Activated CD4-positive, alpha-beta memory T cell treated with anti-CD3 and anti-CD28 coated beads for 36 hours (primary cell): ENCODE measurements at regions of chr10 and their contacts with region 1.

Region 1: GRCh38 chr10:59625721-59626522 is 83.7 kb downstream of the SLC16A9 start:
- DNase-seq: peak; percentile 46
- H3K4me3 Mint-ChIP-seq: no peak overlapping the region
- H3K27ac Mint-ChIP-seq: no peak overlapping the region
- H3K4me1 Mint-ChIP-seq: peaks cover 2% of the 10 kb centered on the region
- H3K27me3 Mint-ChIP-seq: peaks cover 2% of the 10 kb centered on the region

Region 2: DNA sequence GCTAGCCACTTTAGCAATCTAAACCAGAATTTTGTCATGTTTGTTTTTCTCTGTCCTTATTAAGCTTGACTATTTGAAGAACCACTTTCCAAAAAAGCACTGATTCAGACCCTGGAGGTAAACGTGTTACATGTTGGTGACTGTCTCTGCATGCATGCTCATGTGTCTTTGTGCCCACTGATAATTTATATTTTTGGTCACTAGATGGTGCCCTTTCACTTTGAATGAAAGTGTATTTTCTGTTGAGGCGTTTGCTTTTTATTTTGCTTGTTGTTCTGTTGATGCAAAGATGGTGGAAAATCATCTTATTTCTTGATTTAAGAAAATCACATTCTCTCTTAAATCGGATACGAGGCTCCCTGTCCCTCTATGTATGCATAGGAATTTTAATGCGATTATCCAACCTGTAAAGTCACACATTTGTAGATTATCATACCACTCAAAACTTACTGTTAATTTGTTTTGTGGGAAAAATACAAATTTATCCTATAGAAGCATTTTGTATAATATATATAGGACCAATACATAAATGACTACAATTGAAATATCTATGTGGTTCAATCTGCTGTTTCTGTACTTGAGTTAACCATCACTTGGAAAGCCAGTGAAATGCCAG is 843.9 kb before region 1 on chr10:
- CTCF ChIA-PET with region 1: interaction called, 4 read pairs
- POLR2A ChIA-PET with region 1: no interaction called
- intact Hi-C with region 1: loop called (anchors 2 kb)
- DNase-seq: no peak
- H3K4me3 Mint-ChIP-seq: no peak overlapping the region
- H3K27ac Mint-ChIP-seq: no peak overlapping the region
- H3K4me1 Mint-ChIP-seq: no peaks in the 10 kb centered on the region
- H3K27me3 Mint-ChIP-seq: peaks cover 3% of the 10 kb centered on the region

Region 3: DNA sequence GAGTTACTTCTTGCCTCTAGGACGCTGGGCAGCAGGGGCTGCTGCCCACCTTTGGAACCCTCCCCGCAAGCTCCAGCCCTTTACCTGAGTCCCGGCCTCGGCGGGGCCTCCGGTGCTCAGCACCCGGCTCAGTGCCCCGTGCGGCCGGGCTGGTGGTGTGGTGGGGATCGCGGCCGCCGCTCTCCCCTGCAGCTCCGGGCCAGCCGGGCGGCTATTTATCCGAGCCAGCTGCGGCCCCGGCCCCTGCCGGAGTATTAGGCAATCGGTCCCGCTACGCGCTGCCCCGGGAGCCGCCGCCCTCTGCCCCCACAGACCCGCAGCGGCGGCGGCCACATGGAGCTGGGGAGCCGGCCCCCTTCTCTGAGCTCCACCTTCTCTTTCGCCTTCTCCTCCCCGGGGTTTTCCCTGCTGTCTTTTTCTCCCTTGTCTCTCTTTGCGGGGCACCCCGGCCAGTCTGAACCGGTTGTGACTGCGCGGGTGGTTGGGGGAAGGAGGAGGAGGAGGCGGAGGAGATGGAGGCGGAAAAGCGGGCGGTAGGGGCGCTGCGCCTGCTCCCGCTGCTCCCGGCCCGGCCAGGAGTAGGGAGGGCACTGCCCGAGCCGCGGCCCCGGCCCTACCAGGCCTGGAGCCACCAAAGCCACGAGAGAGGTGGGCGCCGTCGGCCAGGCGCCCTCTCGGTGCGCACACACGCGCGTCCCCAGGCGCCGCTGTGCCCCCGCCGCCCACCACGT is 83.6 kb after region 1 on chr10 and contains the start of gene SLC16A9:
- CTCF ChIA-PET with region 1: interaction called, 3 read pairs
- POLR2A ChIA-PET with region 1: no interaction called
- intact Hi-C with region 1: loop called (anchors 1 kb)
- DNase-seq: peak; percentile 76
- H3K4me3 Mint-ChIP-seq: peak within 1 kb of the TSS; percentile 55
- H3K27ac Mint-ChIP-seq: no peak within 1 kb of the TSS
- H3K4me1 Mint-ChIP-seq: no peaks in the 10 kb centered on the region
- H3K27me3 Mint-ChIP-seq: peaks cover 45% of the 10 kb centered on the region
- total RNA-seq, gene SLC16A9: 0.40 to 0.44 TPM

Region 4: DNA sequence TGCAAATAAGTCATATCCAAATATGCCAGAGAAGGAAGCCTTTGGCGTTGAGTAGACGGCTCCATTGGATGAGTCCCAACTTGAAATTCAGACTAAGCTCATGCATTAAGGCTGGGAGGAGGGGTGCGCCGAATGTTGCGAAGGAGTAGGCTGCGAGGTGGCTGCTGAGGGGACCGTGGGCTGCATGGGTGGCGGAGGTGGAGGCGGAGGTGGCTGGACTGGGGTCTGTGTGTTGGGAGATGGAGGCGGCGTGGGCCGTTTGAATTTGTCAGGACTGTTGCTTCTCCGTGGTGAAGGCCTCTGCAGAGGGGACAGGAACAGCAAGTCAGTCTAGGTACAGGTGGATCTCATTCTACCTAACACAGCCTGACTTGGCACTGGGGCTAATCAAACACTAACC is 166.9 kb after region 1 on chr10:
- CTCF ChIA-PET with region 1: no interaction called
- POLR2A ChIA-PET with region 1: no interaction called
- intact Hi-C with region 1: no loop called
- DNase-seq: no peak
- H3K4me3 Mint-ChIP-seq: no peak overlapping the region
- H3K27ac Mint-ChIP-seq: no peak overlapping the region
- H3K4me1 Mint-ChIP-seq: peaks cover 6% of the 10 kb centered on the region
- H3K27me3 Mint-ChIP-seq: no peaks in the 10 kb centered on the region

Region 5: GRCh38 chr10:60032723-60033122 is 406.8 kb after region 1 on chr10:
- CTCF ChIA-PET with region 1: interaction called, 23 read pairs
- POLR2A ChIA-PET with region 1: no interaction called
- intact Hi-C with region 1: loop called (anchors 1 kb)
- DNase-seq: peak; percentile 67
- H3K4me3 Mint-ChIP-seq: no peak overlapping the region
- H3K27ac Mint-ChIP-seq: no peak overlapping the region
- H3K4me1 Mint-ChIP-seq: peaks cover 10% of the 10 kb centered on the region
- H3K27me3 Mint-ChIP-seq: no peaks in the 10 kb centered on the region

Region 6: DNA sequence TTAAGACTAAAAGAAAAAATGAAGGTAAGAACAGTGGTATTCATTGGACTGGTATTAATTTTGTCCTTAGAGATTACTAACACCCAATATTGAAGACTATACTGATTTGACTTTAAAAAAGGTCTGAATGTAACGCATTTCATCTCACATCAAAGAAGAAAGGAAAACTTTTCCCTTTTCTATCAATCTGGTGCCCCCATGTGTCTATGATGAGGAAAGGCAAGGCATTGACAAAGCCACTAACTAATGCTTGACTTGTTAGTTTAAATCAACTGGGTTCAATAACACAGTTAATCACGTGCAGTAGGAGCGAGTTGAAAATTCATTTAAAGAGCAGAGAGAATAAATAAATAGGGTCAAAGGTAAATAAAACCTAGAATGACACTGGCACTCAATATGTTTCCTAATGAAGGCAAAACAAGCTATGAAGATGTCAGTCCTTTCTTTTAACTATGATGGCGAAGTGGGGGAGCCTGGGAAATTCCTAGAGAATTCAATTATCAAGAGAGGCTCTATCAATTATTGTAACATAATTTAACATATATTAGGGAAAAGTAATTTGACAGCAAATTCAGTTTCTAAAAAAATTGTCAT is 582.9 kb after region 1 on chr10:
- CTCF ChIA-PET with region 1: interaction called, 3 read pairs
- POLR2A ChIA-PET with region 1: no interaction called
- intact Hi-C with region 1: loop called (anchors 5 kb)
- DNase-seq: no peak
- H3K4me3 Mint-ChIP-seq: no peak overlapping the region
- H3K27ac Mint-ChIP-seq: no peak overlapping the region
- H3K4me1 Mint-ChIP-seq: peaks cover 20% of the 10 kb centered on the region
- H3K27me3 Mint-ChIP-seq: no peaks in the 10 kb centered on the region